ENCODE measurements at regions of chr14 and their contacts with region 1.

Region 1: GRCh38 chr14:90697577-90698206 is 118.5 kb downstream of the TTC7B start:
- DNase-seq: peak; percentile 96
- H3K4me3 ChIP-seq: peak overlapping the region in 1 of 4 donors; percentile 14
- H3K27ac ChIP-seq: peak overlapping the region; percentile 71 to 86 (median 82)
- H3K4me1 ChIP-seq: peaks cover 32 to 41% (median 34%) of the 10 kb centered on the region in 4 donors
- H3K27me3 ChIP-seq: no peaks in the 10 kb centered on the region
- CTCF ChIP-seq: peak in 2 of 3 experiments; percentile 95 to 97
- EP300 ChIP-seq: no peak
- POLR2A ChIP-seq: no peak

Region 2: GRCh38 chr14:90518941-90519256 is 178.8 kb before region 1 on chr14:
- intact Hi-C with region 1: loop called (anchors 5 kb)
- DNase-seq: no peak
- H3K4me3 ChIP-seq: no peak overlapping the region
- H3K27ac ChIP-seq: peak overlapping the region; percentile 66 to 90 (median 72)
- H3K4me1 ChIP-seq: peaks cover 48 to 83% (median 65%) of the 10 kb centered on the region in 4 donors
- H3K27me3 ChIP-seq: no peaks in the 10 kb centered on the region
- CTCF ChIP-seq: peak; percentile 32 to 55 (median 35)
- EP300 ChIP-seq: no peak
- POLR2A ChIP-seq: no peak

Region 3: GRCh38 chr14:90599748-90600507 is 97.8 kb before region 1 on chr14:
- intact Hi-C with region 1: loop called (anchors 5 kb)
- DNase-seq: no peak
- H3K4me3 ChIP-seq: peak overlapping the region in 2 of 4 donors; percentile 23 to 25
- H3K27ac ChIP-seq: peak overlapping the region; percentile 58 to 75 (median 68)
- H3K4me1 ChIP-seq: peaks cover 0 to 27% (median 19%) of the 10 kb centered on the region in 4 donors
- H3K27me3 ChIP-seq: no peaks in the 10 kb centered on the region
- CTCF ChIP-seq: peak; percentile 31 to 56 (median 36)
- EP300 ChIP-seq: no peak
- POLR2A ChIP-seq: no peak